KBM-7 (cell line): ENCODE measurements at regions of chr18 and their contacts with region 1.

Region 1: DNA sequence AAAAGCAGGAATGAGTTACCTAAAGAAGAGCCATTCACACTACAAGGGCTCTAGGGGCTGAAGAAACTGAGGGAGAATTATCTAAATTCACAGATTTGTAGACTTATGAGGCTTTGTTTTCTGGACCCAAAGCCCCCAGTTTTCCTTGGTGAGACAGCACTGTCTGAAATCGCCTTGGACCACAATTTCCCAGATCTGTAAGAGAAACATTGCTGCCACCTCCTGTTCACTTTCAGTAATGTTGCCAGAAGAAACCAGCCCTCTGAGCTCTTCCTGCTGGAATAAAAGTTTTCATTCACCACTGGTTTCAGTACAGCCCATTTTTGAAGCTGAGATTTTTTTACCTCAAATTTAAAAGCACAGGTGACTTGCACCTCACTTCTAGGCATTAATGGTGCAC is 169.2 kb downstream of the CDH20 start:
- DNase-seq: peak; percentile 59

Region 2: DNA sequence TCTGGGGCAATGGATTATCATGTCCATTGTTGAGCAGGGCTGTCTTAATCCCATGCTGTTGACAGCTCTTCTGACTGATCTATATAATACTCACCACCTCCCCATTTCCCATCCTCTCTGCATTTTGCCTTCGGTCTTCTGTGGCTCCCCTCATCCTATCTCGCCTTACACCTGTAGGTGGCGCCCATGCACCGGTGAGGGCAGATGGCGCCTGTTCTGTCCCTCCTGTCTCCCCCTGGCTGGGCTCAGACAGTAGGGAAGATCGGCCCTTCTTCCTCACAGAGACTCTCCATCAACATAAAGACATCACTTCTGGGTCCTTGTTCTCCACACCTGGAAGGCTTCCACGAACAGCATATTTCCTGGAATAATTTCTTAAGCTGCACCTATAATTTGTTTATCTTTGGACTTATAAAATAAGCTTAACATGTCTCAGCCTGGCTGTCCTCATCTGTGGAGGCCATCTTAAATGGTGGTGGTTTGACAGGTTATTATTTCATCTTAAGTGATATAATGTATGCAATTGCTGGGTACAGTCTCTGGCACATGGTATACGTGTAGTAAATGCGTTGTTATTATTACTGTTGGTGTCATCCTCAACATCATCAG is 180.1 kb before region 1 on chr18:
- in situ Hi-C with region 1: loop called (anchors 25 kb)
- DNase-seq: peak; percentile 68

Region 3: DNA sequence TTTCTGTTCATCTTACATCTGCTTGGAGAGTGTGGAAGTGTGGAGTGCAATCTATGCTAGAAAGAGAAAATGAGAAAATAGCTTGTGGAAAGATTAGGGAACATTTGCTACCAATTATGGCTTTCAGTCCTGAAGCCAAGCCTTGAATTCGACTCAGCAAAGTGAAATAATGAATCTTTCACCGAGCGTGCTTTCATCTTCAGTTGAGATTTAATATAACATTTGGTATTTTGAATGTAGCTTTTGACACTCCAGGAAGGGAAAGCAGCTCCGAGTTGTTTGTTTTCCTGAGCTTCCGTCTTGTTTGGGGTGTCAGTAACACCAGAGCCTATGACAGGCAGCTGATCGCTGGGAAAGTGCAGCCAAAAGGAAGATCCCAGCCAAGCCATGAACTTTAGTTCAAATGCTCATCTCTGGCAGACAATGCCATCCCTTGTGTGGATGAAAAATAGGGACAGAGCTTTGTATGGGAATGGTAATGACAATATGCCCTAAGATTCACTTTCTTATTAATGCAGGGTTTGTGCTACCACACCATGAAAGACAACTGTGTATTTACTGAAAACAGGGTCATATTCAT is 1187.9 kb after region 1 on chr18:
- in situ Hi-C with region 1: no loop called
- DNase-seq: no peak